ENCODE measurements at regions of chr13 and their contacts with region 1.

Region 1: GRCh38 chr13:98370806-98371515 is 193.9 kb upstream of the RNF113B start:
- DNase-seq: peak; percentile 97
- ATAC-seq: peak; percentile 82
- H3K4me3 ChIP-seq: no peak overlapping the region
- H3K27ac ChIP-seq: peak overlapping the region; percentile 98
- H3K4me1 ChIP-seq: peaks cover 26% of the 10 kb centered on the region
- H3K27me3 ChIP-seq: no peaks in the 10 kb centered on the region
- CTCF ChIP-seq: no peak
- POLR2A ChIP-seq: no peak
- RAD21 ChIP-seq: peak; percentile 24; the same call in 1 of the 2 replicates

Region 2: GRCh38 chr13:98004111-98004510 is 366.9 kb before region 1 on chr13:
- CTCF ChIA-PET with region 1: no interaction called
- POLR2A ChIA-PET with region 1: no interaction called
- dilution Hi-C with region 1: no loop called
- in situ Hi-C with region 1: no loop called
- intact Hi-C with region 1: loop called (anchors 10 kb)
- DNase-seq: peak; percentile 94
- ATAC-seq: peak; percentile 98
- H3K4me3 ChIP-seq: no peak overlapping the region
- H3K27ac ChIP-seq: peak overlapping the region; percentile 79
- H3K4me1 ChIP-seq: peaks cover 8% of the 10 kb centered on the region
- H3K27me3 ChIP-seq: no peaks in the 10 kb centered on the region
- CTCF ChIP-seq: no peak
- POLR2A ChIP-seq: no peak
- RAD21 ChIP-seq: peak; percentile 5; the same call in 1 of the 2 replicates

Region 3: DNA sequence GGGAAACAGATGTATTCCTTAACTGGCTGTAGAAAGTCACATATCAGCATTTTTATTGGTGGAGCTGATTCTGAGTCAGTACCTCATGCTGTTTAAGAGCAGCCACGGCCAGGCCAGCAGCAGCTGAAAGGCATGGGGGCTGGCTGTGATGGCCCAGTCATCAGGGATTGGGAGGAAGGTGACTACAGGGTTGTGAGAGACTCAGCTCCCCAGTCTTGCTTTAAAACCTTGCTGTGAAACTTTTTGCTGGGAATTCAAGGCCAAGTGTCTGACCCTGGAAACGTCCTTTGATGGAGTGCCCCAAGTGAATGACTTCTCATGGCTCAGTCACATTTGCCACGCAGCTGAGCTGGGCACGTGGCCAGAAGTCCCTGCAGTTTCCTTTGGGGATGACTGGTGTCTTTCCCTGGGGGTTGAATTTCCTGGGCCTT is 154.8 kb before region 1 on chr13:
- CTCF ChIA-PET with region 1: interaction called, 5 read pairs
- POLR2A ChIA-PET with region 1: no interaction called
- dilution Hi-C with region 1: no loop called
- in situ Hi-C with region 1: no loop called
- intact Hi-C with region 1: loop called (anchors 5 kb)
- DNase-seq: peak; percentile 93
- ATAC-seq: peak; percentile 63
- H3K4me3 ChIP-seq: no peak overlapping the region
- H3K27ac ChIP-seq: peak overlapping the region; percentile 65
- H3K4me1 ChIP-seq: peaks cover 42% of the 10 kb centered on the region
- H3K27me3 ChIP-seq: no peaks in the 10 kb centered on the region
- CTCF ChIP-seq: no peak
- POLR2A ChIP-seq: peak; percentile 63
- RAD21 ChIP-seq: peak; percentile 20

Region 4: GRCh38 chr13:98581971-98582680 is 211.2 kb after region 1 on chr13:
- CTCF ChIA-PET with region 1: no interaction called
- POLR2A ChIA-PET with region 1: no interaction called
- dilution Hi-C with region 1: no loop called
- in situ Hi-C with region 1: no loop called
- intact Hi-C with region 1: no loop called
- DNase-seq: peak; percentile 85
- ATAC-seq: peak; percentile 54
- H3K4me3 ChIP-seq: no peak overlapping the region
- H3K27ac ChIP-seq: peak overlapping the region; percentile 20; the same call in 1 of the 2 replicates
- H3K4me1 ChIP-seq: peaks cover 8% of the 10 kb centered on the region
- H3K27me3 ChIP-seq: no peaks in the 10 kb centered on the region
- CTCF ChIP-seq: no peak
- POLR2A ChIP-seq: no peak
- RAD21 ChIP-seq: no peak

Region 5: GRCh38 chr13:99093997-99094396 is 723.0 kb after region 1 on chr13:
- CTCF ChIA-PET with region 1: no interaction called
- POLR2A ChIA-PET with region 1: no interaction called
- dilution Hi-C with region 1: no loop called
- in situ Hi-C with region 1: no loop called
- intact Hi-C with region 1: no loop called
- DNase-seq: no peak
- ATAC-seq: no peak
- H3K4me3 ChIP-seq: no peak overlapping the region
- H3K27ac ChIP-seq: no peak overlapping the region
- H3K4me1 ChIP-seq: no peaks in the 10 kb centered on the region
- H3K27me3 ChIP-seq: peaks cover 9% of the 10 kb centered on the region
- CTCF ChIP-seq: no peak
- POLR2A ChIP-seq: no peak
- RAD21 ChIP-seq: no peak